ENCODE measurements at regions of chr10 and their contacts with region 1.

Region 1: GRCh38 chr10:79374312-79375191 is 27.3 kb downstream of the PPIF start:
- DNase-seq: peak; percentile 84
- H3K4me3 Mint-ChIP-seq: no peak overlapping the region
- H3K27ac Mint-ChIP-seq: no peak overlapping the region
- H3K4me1 Mint-ChIP-seq: peaks cover 2% of the 10 kb centered on the region
- H3K27me3 Mint-ChIP-seq: no peaks in the 10 kb centered on the region

Region 2: GRCh38 chr10:79358783-79359182 is 15.8 kb before region 1 on chr10:
- CTCF ChIA-PET with region 1: interaction called, 29 read pairs
- POLR2A ChIA-PET with region 1: no interaction called
- intact Hi-C with region 1: no loop called
- DNase-seq: no peak
- H3K4me3 Mint-ChIP-seq: no peak overlapping the region
- H3K27ac Mint-ChIP-seq: no peak overlapping the region
- H3K4me1 Mint-ChIP-seq: peaks cover 34% of the 10 kb centered on the region
- H3K27me3 Mint-ChIP-seq: no peaks in the 10 kb centered on the region

Region 3: GRCh38 chr10:79445141-79445976 is 70.8 kb after region 1 on chr10 and contains the start of gene ZCCHC24:
- CTCF ChIA-PET with region 1: interaction called, 14 read pairs
- POLR2A ChIA-PET with region 1: no interaction called
- intact Hi-C with region 1: no loop called
- DNase-seq: peak; percentile 95
- H3K4me3 Mint-ChIP-seq: peak within 1 kb of the TSS; percentile 70
- H3K27ac Mint-ChIP-seq: peak within 1 kb of the TSS; percentile 26
- H3K4me1 Mint-ChIP-seq: peaks cover 18% of the 10 kb centered on the region
- H3K27me3 Mint-ChIP-seq: peaks cover 6% of the 10 kb centered on the region
- total RNA-seq, gene ZCCHC24: 0.77 to 1.00 TPM

Region 4: GRCh38 chr10:79463578-79464496 is 89.3 kb after region 1 on chr10:
- CTCF ChIA-PET with region 1: interaction called, 74 read pairs
- POLR2A ChIA-PET with region 1: interaction called, 3 read pairs
- intact Hi-C with region 1: loop called (anchors 1 kb)
- DNase-seq: no peak
- H3K4me3 Mint-ChIP-seq: no peak overlapping the region
- H3K27ac Mint-ChIP-seq: no peak overlapping the region
- H3K4me1 Mint-ChIP-seq: no peaks in the 10 kb centered on the region
- H3K27me3 Mint-ChIP-seq: peaks cover 1% of the 10 kb centered on the region

Region 5: DNA sequence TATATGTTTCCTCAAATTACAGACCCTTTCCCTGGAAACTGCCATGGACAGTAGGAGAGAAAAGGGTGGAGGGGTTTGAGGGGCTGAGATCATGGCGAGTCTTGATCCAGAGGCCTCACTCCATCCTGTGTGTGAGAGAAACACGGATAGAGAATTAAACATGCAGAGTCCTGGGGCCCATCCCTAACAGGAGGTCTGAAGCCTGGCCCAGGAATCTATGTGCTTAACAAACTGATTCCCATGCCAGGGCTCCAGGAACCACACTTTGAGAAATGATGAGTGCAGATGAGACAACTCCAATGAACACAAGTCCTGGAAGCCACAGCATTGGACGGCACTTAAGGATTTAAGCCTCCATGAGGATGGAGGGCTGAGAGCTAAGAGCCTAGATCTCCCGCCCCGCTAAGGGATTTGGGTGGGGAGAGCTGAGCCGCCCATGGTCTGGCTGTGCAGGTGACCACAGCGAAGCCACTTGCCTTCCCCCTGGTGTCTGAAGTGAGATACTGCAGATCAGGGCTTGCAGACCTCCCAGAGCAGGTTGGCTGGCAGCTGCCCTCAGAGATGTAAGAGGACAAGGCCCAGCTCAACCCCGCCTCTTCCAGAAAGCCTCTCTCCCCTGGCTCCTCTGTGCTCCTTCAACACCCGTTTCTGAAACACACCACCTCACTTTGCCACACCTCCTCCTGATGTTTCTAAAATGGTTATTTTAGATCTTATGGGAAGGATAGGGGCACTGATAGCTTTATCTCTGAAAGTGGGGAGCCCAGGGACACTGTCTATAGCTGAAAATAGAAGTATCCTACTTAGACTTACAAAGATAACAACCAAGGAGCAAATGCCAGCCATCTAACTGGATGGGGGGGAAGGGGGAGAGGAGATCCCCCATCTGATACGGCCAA is 113.0 kb after region 1 on chr10:
- CTCF ChIA-PET with region 1: interaction called, 69 read pairs
- POLR2A ChIA-PET with region 1: no interaction called
- intact Hi-C with region 1: loop called (anchors 1 kb)
- DNase-seq: peak; percentile 45
- H3K4me3 Mint-ChIP-seq: no peak overlapping the region
- H3K27ac Mint-ChIP-seq: no peak overlapping the region
- H3K4me1 Mint-ChIP-seq: no peaks in the 10 kb centered on the region
- H3K27me3 Mint-ChIP-seq: no peaks in the 10 kb centered on the region

Measured in activated CD4-positive, alpha-beta memory T cell treated with anti-CD3 and anti-CD28 coated beads for 36 hours (primary cell).